ENCODE measurements at regions of chr5 and their contacts with region 1.

Region 1: GRCh38 chr5:78569448-78569847 is 79.1 kb downstream of the LHFPL2 start:
- DNase-seq: peak in 1 of 2 donors; percentile 28
- ATAC-seq: peak in 1 of 8 donors; percentile 13
- H3K4me3 ChIP-seq: no peak overlapping the region
- H3K27ac ChIP-seq: no peak overlapping the region
- H3K4me1 ChIP-seq: peaks cover 0 to 56% (median 38%) of the 10 kb centered on the region in 9 donors
- H3K27me3 ChIP-seq: no peaks in the 10 kb centered on the region
- CTCF ChIP-seq: no peak

Region 2: DNA sequence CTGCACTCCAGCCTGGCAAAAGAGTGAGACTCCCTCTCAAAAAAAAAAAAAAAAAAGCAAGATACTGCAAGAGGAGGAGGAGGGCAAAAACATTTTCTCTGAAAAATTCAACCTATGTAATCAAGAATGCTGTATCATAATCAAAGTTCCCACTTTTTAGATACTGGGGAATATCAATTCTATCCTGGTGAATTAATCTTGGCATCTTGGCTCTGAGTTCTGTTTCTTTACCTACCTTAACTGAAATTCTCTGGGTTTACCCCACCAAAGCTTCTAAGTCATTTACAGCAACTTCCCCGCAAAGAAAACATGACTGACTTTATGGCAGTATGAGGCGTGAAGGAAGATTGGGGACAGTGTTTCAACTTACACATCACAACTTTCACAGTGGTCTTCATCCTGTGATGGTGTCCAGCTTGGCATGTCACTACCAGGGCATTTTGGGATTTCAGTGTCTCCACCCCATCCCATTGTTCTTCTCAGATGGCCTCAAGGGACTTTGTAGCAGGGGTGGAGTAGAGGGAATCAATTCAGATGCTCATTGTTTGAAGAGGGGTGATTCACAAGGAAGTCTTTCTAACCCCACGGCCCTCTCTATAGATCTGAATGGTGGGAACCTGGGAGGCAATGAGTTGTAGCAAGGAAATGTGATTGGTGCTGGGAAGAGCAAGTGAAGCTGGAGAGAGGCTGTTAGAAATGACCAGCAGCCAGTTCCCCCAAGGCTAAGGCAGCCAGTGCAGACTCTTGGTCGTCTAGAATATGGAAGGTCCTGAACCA is 78.6 kb before region 1 on chr5:
- intact Hi-C with region 1: no loop called
- DNase-seq: no peak
- ATAC-seq: peak in 1 of 8 donors; percentile 49
- H3K4me3 ChIP-seq: no peak overlapping the region
- H3K27ac ChIP-seq: no peak overlapping the region
- H3K4me1 ChIP-seq: peaks cover 0 to 38% (median 20%) of the 10 kb centered on the region in 9 donors
- H3K27me3 ChIP-seq: no peaks in the 10 kb centered on the region
- CTCF ChIP-seq: no peak

Region 3: GRCh38 chr5:78648359-78649210 is 79.1 kb after region 1 on chr5 and contains the start of gene LHFPL2:
- intact Hi-C with region 1: loop called in 1 of 10 experiments (anchors 10 kb)
- DNase-seq: peak; percentile 72 to 82
- ATAC-seq: peak; percentile 74 to 92 (median 84)
- H3K4me3 ChIP-seq: peak within 1 kb of the TSS; percentile 70 to 89 (median 80)
- H3K27ac ChIP-seq: peak within 1 kb of the TSS; percentile 76 to 96 (median 94)
- H3K4me1 ChIP-seq: peaks cover 0 to 41% (median 20%) of the 10 kb centered on the region in 9 donors
- H3K27me3 ChIP-seq: peaks cover 0 to 28% (median 0%) of the 10 kb centered on the region in 7 donors
- CTCF ChIP-seq: no peak
- total RNA-seq, gene LHFPL2: 3.8 to 14.9 (median 5.1) TPM

Measured in heart right ventricle (tissue), 16 donors.